ENCODE measurements at regions of chr2 and their contacts with region 1.

Region 1: GRCh38 chr2:60550178-60550983 is 3.1 kb downstream of the BCL11A start:
- DNase-seq: peak in 1 of 2 donors; percentile 42
- ATAC-seq: peak; percentile 77 to 82
- H3K4me3 ChIP-seq: peak overlapping the region; percentile 63 to 79 (median 68)
- H3K27ac ChIP-seq: no peak overlapping the region
- H3K4me1 ChIP-seq: peaks cover 36 to 51% of the 10 kb centered on the region in 2 donors
- H3K27me3 ChIP-seq: peaks cover 66 to 94% (median 94%) of the 10 kb centered on the region in 3 donors
- CTCF ChIP-seq: peak in 3 of 5 experiments; percentile 13 to 51 (median 46)
- POLR2A ChIP-seq: no peak

Region 2: GRCh38 chr2:59276033-59276432 is 1274.3 kb before region 1 on chr2:
- in situ Hi-C with region 1: loop called in 1 of 4 experiments (anchors 25 kb)
- intact Hi-C with region 1: no loop called
- DNase-seq: no peak
- ATAC-seq: no peak
- H3K4me3 ChIP-seq: no peak overlapping the region
- H3K27ac ChIP-seq: no peak overlapping the region
- H3K4me1 ChIP-seq: no peaks in the 10 kb centered on the region
- H3K27me3 ChIP-seq: no peaks in the 10 kb centered on the region
- CTCF ChIP-seq: no peak
- POLR2A ChIP-seq: no peak

Region 3: GRCh38 chr2:59301466-59302402 is 1248.6 kb before region 1 on chr2:
- in situ Hi-C with region 1: loop called in 2 of 4 experiments (anchors 25 kb)
- intact Hi-C with region 1: loop called (anchors 5 kb)
- DNase-seq: peak in 1 of 2 donors; percentile 12
- ATAC-seq: peak; percentile 69 to 80
- H3K4me3 ChIP-seq: no peak overlapping the region
- H3K27ac ChIP-seq: no peak overlapping the region
- H3K4me1 ChIP-seq: no peaks in the 10 kb centered on the region
- H3K27me3 ChIP-seq: no peaks in the 10 kb centered on the region
- CTCF ChIP-seq: peak in 2 of 5 experiments; percentile 48 to 61
- POLR2A ChIP-seq: no peak

Region 4: GRCh38 chr2:60439219-60439974 is 111.0 kb before region 1 on chr2:
- in situ Hi-C with region 1: no loop called
- intact Hi-C with region 1: no loop called
- DNase-seq: peak in 1 of 2 donors; percentile 18
- ATAC-seq: no peak
- H3K4me3 ChIP-seq: no peak overlapping the region
- H3K27ac ChIP-seq: no peak overlapping the region
- H3K4me1 ChIP-seq: peaks cover 15% of the 10 kb centered on the region in 2 donors
- H3K27me3 ChIP-seq: no peaks in the 10 kb centered on the region
- CTCF ChIP-seq: no peak
- POLR2A ChIP-seq: no peak

Region 5: DNA sequence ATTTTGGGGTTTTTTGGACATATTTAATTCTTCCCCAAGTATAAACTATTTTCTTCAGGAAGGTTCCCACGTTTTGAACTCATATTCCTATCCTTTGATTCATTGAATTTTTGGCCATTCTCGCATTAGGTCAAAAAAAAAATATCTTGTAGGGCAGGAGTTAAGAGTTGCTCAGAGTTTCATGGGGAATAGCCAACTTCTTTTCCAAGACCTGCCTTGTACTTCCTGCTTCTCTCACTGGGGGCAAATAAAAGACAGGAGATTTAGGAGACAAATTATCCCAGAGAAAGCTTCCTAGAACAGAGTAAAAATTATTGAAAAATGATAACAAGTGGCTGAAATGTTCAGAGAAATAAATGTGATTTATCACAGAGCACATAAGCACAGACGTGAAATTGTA is 58.3 kb after region 1 on chr2:
- in situ Hi-C with region 1: no loop called
- intact Hi-C with region 1: no loop called
- DNase-seq: no peak
- ATAC-seq: no peak
- H3K4me3 ChIP-seq: no peak overlapping the region
- H3K27ac ChIP-seq: no peak overlapping the region
- H3K4me1 ChIP-seq: no peaks in the 10 kb centered on the region
- H3K27me3 ChIP-seq: no peaks in the 10 kb centered on the region
- CTCF ChIP-seq: no peak
- POLR2A ChIP-seq: no peak

Region 6: DNA sequence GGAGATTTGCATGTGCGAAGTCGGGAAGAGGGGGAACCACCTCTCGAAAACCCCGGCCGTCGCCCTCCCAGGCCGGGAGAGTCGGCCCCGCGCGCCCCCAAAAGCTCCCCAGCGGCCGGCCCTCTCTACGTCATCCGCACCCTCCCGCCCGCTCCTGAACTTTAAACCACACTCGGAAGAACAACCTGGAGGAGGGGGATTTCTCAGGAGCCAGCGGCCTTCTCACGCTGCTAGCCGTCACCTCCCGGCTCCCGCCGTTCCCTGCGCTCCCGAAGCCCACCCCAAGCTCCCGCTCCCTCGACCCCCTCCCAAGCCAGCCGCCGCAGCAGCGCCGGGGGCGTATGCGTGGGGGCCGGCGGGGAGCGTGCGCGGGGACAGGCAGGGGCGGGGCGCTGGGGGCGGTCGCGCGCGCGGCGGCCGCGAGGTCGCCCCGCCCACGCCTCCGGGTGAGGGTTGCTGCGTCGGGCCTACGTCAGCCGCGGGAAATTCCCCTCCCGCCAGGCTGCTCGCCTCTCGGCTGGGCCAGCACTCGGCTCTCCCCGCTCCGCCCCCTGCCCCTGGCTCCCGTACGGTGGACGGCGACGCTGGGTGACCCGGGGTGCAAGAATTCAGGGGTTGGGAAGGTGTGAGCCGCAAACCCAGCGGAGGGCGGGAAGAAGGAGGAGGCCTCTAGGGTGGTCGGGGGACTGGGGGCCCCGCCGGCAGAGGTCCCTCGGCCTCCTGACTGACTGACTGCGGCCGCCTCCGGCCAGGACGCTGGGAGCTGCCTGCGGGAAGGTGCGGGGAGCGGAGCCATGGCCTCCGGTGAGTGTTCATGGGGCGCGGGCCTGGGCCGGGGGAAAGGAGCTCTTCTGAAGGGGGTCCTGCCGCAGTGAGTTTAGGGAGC is 330.9 kb after region 1 on chr2 and contains the start of gene REL:
- in situ Hi-C with region 1: no loop called
- intact Hi-C with region 1: loop called (anchors 5 kb)
- DNase-seq: peak; percentile 84
- ATAC-seq: peak; percentile 91 to 92
- H3K4me3 ChIP-seq: peak within 1 kb of the TSS; percentile 69 to 99 (median 75)
- H3K27ac ChIP-seq: peak within 1 kb of the TSS; percentile 89 to 100 (median 91)
- H3K4me1 ChIP-seq: peaks cover 27 to 42% of the 10 kb centered on the region in 2 donors
- H3K27me3 ChIP-seq: no peaks in the 10 kb centered on the region
- CTCF ChIP-seq: no peak
- POLR2A ChIP-seq: peak; percentile 81 to 89
- total RNA-seq, gene REL: 4.2 to 7.6 (median 5.4) TPM

Measured in gastrocnemius medialis (tissue), 4 donors.